Astrocyte of the cerebellum (primary cell): ENCODE measurements at regions of chr1 and their contacts with region 1.

Region 1: GRCh38 chr1:19485362-19486187 is at the start of gene CAPZB:
- DNase-seq: peak; percentile 49
- H3K4me3 ChIP-seq: peak within 1 kb of the TSS; percentile 94
- CTCF ChIP-seq: no peak

Region 2: DNA sequence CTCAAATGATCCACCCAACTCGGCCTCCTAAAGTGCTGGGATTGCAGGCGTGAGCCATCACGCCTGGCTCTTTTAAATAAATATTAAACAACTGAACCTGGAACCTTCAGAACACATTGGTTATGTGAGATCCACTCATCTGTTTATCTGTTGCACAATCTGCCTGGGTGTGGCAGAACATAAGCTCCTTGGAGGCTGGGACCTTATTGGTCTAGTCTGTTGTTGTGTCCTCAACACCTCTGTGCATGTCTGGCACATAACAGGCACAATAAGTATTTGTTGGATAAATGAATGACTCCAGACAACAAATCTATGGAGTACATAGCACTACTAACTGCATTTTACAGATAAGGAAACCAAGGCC is 154.4 kb after region 1 on chr1:
- in situ Hi-C with region 1: loop called (anchors 10 kb)
- DNase-seq: no peak
- H3K4me3 ChIP-seq: no peak overlapping the region
- CTCF ChIP-seq: no peak